ENCODE measurements at regions of chr1 and their contacts with region 1.

Region 1: GRCh38 chr1:231421993-231422764 is at the start of gene EGLN1:
- DNase-seq: peak; percentile 78
- H3K4me3 Mint-ChIP-seq: peak within 1 kb of the TSS; percentile 93
- H3K27ac Mint-ChIP-seq: peak within 1 kb of the TSS; percentile 92
- H3K4me1 Mint-ChIP-seq: peaks cover 51% of the 10 kb centered on the region
- H3K27me3 Mint-ChIP-seq: peaks cover 18% of the 10 kb centered on the region
- total RNA-seq, gene EGLN1: 17.1 and 17.8 TPM in 2 replicates

Region 2: DNA sequence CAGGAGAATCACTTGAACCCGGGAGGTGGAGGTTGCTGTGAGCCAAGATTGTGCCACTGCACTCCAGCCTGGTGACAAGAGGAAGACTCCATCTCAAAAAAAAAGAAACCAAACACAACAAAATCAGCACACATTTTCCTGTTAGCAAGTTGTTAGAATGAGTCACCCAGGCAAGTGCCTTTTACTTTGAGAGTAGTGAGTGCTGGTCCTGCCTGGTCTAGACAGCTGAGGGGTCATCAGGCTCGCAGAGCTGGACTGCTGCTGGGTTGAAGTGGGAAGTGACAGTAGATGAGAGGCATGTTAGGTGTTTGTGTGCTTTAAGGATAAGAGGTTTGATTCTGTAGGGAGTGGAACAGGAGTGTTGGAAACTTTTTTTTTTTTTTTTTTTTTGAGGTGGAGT is 149.3 kb before region 1 on chr1:
- intact Hi-C with region 1: loop called (anchors 2 kb)
- DNase-seq: peak; percentile 27
- H3K4me3 Mint-ChIP-seq: peak overlapping the region; percentile 83
- H3K27ac Mint-ChIP-seq: peak overlapping the region; percentile 100
- H3K4me1 Mint-ChIP-seq: peaks cover 39% of the 10 kb centered on the region
- H3K27me3 Mint-ChIP-seq: no peaks in the 10 kb centered on the region

Region 3: DNA sequence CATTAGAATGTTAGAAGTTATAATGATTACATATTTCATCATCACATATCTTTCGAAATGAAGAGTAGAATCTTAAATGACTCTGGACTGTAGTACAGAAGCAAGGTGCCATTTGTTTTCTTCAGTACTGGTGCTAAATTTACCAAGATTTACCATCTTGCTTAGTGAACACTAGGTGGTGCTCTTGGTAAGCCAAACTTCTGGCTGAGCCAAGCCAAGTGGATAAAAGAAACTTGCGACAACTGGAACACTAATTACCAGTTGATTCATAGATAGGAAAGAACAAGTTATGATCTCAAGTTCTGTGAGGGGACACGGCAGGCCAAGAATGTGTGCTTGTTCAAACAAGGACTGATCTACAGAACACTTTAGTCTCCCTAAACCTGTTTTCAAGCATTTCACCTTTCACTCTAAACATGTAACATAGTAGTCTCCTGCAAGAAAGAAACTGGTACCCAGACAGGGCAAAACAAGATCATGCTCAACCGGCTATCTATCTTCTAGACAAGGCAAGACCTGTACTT is 64.3 kb before region 1 on chr1:
- intact Hi-C with region 1: loop called (anchors 1 kb)
- DNase-seq: no peak
- H3K4me3 Mint-ChIP-seq: no peak overlapping the region
- H3K27ac Mint-ChIP-seq: no peak overlapping the region
- H3K4me1 Mint-ChIP-seq: peaks cover 13% of the 10 kb centered on the region
- H3K27me3 Mint-ChIP-seq: no peaks in the 10 kb centered on the region

Region 4: GRCh38 chr1:231390071-231390470 is 32.1 kb before region 1 on chr1:
- intact Hi-C with region 1: loop called (anchors 1 kb)
- DNase-seq: no peak
- H3K4me3 Mint-ChIP-seq: peak overlapping the region; percentile 48
- H3K27ac Mint-ChIP-seq: peak overlapping the region; percentile 50
- H3K4me1 Mint-ChIP-seq: peaks cover 53% of the 10 kb centered on the region
- H3K27me3 Mint-ChIP-seq: no peaks in the 10 kb centered on the region

Region 5: DNA sequence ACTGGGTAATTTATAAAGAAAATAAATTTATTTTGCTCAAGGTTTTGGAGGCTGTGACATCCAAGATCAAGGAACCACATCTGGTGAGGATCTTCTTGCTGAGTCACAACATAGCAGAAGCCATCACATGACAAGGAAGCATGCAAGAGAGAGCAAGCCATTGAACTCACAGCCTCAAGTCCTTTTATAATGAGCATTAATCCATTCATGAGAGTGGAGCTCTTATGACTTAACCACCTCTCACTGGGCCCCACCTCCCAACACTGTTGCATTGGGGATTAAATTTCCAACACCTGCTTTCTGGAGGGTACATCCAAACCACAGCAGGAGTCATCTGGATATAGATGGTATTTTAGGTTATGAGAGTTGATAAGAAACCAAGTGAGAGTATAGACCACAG is 20.6 kb after region 1 on chr1:
- intact Hi-C with region 1: no loop called
- DNase-seq: no peak
- H3K4me3 Mint-ChIP-seq: no peak overlapping the region
- H3K27ac Mint-ChIP-seq: no peak overlapping the region
- H3K4me1 Mint-ChIP-seq: no peaks in the 10 kb centered on the region
- H3K27me3 Mint-ChIP-seq: peaks cover 39% of the 10 kb centered on the region

Region 6: DNA sequence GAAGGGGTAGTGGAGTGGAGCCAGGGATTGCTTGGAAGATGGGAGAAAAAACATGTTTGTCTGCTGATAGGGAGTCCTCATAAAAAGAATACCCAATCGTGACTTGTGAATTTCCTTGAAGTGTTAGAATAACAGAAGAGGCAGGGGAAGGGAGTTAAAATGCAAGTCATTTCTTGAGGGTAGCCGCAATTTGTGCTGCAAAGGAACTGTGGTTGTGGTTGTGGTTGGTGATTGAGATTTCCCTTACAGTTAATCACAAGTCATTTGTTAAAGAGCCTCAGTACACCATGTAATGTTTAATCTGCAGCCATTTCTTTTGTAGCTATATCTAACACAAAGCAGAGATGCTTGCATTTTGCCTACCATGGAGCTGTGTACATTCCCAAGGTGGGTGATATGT is 38.4 kb after region 1 on chr1:
- intact Hi-C with region 1: loop called (anchors 1 kb)
- DNase-seq: peak; percentile 72
- H3K4me3 Mint-ChIP-seq: no peak overlapping the region
- H3K27ac Mint-ChIP-seq: peak overlapping the region; percentile 32
- H3K4me1 Mint-ChIP-seq: peaks cover 45% of the 10 kb centered on the region
- H3K27me3 Mint-ChIP-seq: peaks cover 64% of the 10 kb centered on the region

Region 7: DNA sequence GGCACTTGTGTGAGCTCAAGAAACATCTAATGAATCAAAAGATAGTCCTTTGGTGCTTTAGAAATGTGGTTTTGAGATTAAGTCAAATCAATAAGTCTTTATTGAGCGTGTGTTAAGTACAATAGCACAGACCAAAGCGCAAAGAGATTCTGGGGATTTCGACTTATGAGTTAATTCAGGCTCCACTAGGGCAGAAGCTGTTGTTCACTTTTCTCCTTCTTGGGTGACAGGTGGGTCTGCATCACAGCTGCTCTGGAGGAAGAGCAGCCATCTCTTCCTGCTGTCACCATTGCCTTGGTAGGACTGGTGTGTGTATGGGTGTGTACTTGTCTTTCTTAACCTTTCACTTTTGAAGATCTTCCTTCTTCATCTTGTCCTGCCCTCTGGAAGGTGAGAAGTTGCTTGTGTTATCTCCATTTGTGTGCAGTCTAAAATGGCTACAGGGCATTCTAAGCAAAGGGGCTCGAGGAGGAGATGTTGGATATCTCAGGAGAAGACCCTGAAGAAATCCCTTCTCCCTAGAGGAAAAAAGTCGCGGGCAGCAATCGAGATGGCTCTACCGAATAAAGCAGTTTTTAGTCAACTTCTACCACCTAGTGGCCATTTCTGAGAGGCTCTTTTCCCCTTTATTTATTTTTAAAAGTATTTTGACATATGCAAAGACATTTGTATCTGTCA is 181.6 kb after region 1 on chr1:
- intact Hi-C with region 1: loop called (anchors 2 kb)
- DNase-seq: no peak
- H3K4me3 Mint-ChIP-seq: peak overlapping the region; percentile 86
- H3K27ac Mint-ChIP-seq: peak overlapping the region; percentile 50
- H3K4me1 Mint-ChIP-seq: peaks cover 14% of the 10 kb centered on the region
- H3K27me3 Mint-ChIP-seq: peaks cover 12% of the 10 kb centered on the region